ENCODE measurements at regions of chr12 and their contacts with region 1.

Region 1: GRCh38 chr12:42332301-42333285 is 6.6 kb downstream of the PPHLN1 start:
- DNase-seq: peak in 2 of 10 donors; percentile 20 to 45
- H3K4me3 ChIP-seq: no peak overlapping the region
- H3K27ac ChIP-seq: no peak overlapping the region
- H3K27me3 ChIP-seq: no peaks in the 10 kb centered on the region
- CTCF ChIP-seq: peak; percentile 51 to 87 (median 72)

Region 2: DNA sequence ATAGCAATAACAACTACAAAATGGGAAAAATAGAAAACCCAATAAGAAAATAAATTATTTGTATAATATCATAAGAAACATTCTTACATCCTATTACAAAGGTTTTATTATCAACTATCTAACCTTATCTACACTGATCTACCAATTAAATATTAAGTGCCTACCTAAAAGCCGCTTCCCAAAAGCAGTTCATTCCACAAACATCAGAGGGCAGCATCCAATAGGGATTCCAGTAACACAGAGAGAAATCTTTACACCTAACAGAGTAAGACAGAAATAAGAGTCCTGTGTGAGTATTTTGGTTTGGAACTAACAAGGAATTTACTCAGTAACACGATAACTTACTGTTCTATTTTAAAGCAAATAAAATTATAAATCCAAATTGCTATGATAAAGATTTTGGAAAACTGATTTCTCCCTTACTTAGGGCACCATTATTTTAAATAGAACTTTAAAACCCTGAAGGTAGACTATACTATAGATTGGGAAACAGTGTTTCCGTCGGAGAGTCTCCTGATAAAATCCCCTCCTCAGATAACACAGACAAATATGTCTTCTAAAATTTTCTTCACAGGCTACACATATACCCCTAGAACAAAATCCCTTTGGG is 202.9 kb before region 1 on chr12:
- intact Hi-C with region 1: loop called in 1 of 2 experiments (anchors 1 kb)
- DNase-seq: peak in 2 of 10 donors; percentile 42 to 49
- H3K4me3 ChIP-seq: no peak overlapping the region
- H3K27ac ChIP-seq: no peak overlapping the region
- H3K27me3 ChIP-seq: no peaks in the 10 kb centered on the region
- CTCF ChIP-seq: peak; percentile 52 to 95 (median 82)

Measured in dorsolateral prefrontal cortex (tissue), 120 donors.